ENCODE measurements at regions of chr2 and their contacts with region 1.

Region 1: DNA sequence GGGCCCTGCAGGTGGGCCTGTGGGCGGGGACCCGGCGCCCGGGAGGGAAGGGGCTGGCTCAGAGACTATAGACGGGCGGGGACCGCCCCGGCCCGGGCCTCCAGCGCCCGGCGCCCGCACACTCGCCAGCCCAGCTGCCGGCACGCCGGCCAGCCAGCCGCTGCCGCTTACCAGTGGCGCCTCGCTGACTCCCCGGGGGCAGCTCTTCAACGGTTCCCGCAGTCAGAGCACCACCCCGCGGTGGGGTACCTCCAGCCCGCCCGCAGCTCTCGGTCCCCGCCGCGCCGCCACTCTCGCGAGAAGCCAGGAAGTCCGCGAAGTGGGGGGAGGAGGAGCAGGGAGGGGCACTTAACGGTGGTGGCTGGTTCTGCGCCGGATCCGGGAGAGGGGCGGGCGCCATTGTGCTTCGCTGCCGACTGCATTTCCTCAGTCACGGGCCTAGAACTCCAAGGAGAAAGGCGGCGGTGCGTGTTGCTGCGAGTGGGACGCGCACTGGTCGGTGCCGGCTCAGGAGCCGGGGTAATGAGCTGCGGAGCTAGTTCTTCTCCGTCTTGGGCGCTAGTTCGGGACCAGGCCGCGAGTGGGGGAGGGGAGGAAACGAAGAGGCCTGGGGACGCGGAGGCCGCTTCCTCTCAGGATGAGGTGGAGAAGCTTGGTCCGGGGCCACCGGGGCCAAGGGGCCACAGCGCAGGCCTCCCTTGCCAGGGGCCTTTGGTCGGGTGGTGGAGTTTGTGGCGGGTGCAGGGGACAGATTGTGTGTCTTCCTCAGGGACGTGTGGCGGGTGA is at the start of gene MARCHF7:
- DNase-seq: peak; percentile 96
- ATAC-seq: peak; percentile 98 to 99
- total RNA-seq, gene MARCHF7: 59.9 to 75.4 TPM

Region 2: GRCh38 chr2:159497256-159497655 is 215.1 kb before region 1 on chr2:
- intact Hi-C with region 1: no loop called
- DNase-seq: no peak
- ATAC-seq: peak; percentile 70 to 99

Region 3: GRCh38 chr2:159615140-159615951 is 97.0 kb before region 1 on chr2:
- intact Hi-C with region 1: loop called (anchors 2 to 10 kb)
- DNase-seq: peak; percentile 92
- ATAC-seq: peak; percentile 96 to 98

Measured in left cardiac atrium (tissue), 4 donors.